ENCODE measurements at regions of chr11 and their contacts with region 1.

Region 1: GRCh38 chr11:67468835-67469811 is at the start of gene TMEM134:
- DNase-seq: peak; percentile 92 to 94
- ATAC-seq: peak; percentile 92 to 96 (median 94)
- H3K4me3 ChIP-seq: peak within 1 kb of the TSS; percentile 67 to 99 (median 84)
- H3K27ac ChIP-seq: peak within 1 kb of the TSS; percentile 44 to 94 (median 89)
- H3K4me1 ChIP-seq: peaks cover 4 to 47% (median 22%) of the 10 kb centered on the region in 9 donors
- H3K27me3 ChIP-seq: no peaks in the 10 kb centered on the region
- CTCF ChIP-seq: peak in 8 of 9 donors; percentile 44 to 73 (median 56)
- total RNA-seq, gene TMEM134: 69.8 to 104 (median 81.2) TPM

Region 2: DNA sequence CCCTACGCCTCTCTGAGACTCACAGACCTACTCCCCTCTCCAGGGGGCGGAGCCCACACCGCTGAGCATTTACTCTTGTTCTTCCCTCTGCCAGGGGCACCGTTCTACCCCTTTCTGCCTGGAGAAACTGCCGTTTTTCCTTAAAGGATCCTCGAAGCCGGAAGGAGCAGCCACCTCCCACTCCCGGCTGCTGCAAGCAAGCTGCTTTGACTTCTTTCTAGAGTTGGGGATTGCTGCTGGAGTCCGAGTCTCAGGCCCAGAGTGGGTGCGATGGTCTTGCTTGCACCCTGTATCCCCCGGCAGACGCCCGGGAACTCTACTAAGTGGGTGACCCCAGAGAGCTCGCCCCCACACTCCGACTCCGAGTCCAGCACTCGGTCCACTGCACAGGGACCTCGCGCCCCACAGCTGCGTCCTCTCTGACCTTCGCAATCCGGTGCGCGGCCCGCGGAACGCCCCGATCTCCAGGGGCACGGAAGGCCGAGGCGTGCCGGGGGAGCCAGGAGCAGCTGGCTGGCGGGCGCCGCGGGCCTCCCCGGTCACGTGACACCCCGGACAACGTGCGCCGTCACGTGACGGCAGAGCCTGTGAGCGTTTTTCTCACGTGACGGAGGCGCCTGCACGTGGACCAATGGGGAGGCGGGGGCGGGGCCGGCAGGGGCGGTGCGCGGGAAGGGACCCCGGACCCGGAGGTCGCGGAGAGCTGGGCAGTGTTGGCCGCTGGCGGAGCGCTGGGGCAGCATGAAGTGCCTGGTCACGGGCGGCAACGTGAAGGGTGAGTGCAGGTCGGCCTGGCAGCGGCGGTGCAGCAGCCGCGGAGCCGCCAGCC is 77.6 kb before region 1 on chr11 and contains the start of gene RAD9A:
- intact Hi-C with region 1: loop called in 1 of 10 experiments (anchors 5 kb)
- DNase-seq: peak; percentile 95
- ATAC-seq: peak; percentile 82 to 94 (median 88)
- H3K4me3 ChIP-seq: peak within 1 kb of the TSS; percentile 66 to 91 (median 81)
- H3K27ac ChIP-seq: peak within 1 kb of the TSS; percentile 28 to 92 (median 86)
- H3K4me1 ChIP-seq: peaks cover 4 to 29% (median 21%) of the 10 kb centered on the region in 9 donors
- H3K27me3 ChIP-seq: no peaks in the 10 kb centered on the region
- CTCF ChIP-seq: no peak
- total RNA-seq, gene RAD9A: 4.8 to 13.8 (median 6.4) TPM

Region 3: GRCh38 chr11:67401495-67402191 is 67.5 kb before region 1 on chr11 and contains the start of gene PPP1CA:
- intact Hi-C with region 1: loop called in 7 of 10 experiments (anchors 5 kb)
- DNase-seq: peak; percentile 90 to 94
- ATAC-seq: peak; percentile 76 to 95 (median 86)
- H3K4me3 ChIP-seq: peak within 1 kb of the TSS; percentile 68 to 99 (median 96)
- H3K27ac ChIP-seq: peak within 1 kb of the TSS; percentile 89 to 99 (median 97)
- H3K4me1 ChIP-seq: peaks cover 0 to 89% (median 54%) of the 10 kb centered on the region in 9 donors
- H3K27me3 ChIP-seq: no peaks in the 10 kb centered on the region
- CTCF ChIP-seq: peak; percentile 38 to 91 (median 62)
- total RNA-seq, gene PPP1CA: 92.0 to 143 (median 103) TPM

Region 4: DNA sequence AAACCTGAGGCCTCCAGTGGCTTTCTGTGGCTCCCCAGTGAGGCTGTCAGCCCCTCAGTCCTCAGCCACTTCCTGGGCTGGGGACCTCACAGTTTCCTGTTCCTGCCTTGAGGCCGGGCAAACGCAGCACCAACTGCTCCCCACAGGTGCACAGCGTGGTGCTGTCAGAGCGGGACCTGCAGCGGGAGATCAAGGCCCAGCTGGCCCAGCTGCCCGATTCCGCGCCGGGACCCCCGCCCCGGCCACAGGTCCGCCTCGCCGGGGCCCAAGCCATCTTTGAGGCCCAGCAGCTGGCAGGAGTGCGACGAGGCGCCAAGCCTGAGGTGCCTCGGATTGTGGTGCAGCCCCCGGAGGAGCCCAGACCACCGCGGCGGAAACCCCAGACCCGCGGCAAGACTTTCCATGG is 59.9 kb before region 1 on chr11:
- intact Hi-C with region 1: loop called in 7 of 10 experiments (anchors 5 kb)
- DNase-seq: no peak
- ATAC-seq: no peak
- H3K4me3 ChIP-seq: peak overlapping the region in 2 of 10 donors; percentile 20 to 41
- H3K27ac ChIP-seq: peak overlapping the region in 1 of 10 donors; percentile 99
- H3K4me1 ChIP-seq: peaks cover 0 to 57% (median 0%) of the 10 kb centered on the region in 9 donors
- H3K27me3 ChIP-seq: peaks cover 0 to 54% (median 45%) of the 10 kb centered on the region in 7 donors
- CTCF ChIP-seq: no peak

Region 5: DNA sequence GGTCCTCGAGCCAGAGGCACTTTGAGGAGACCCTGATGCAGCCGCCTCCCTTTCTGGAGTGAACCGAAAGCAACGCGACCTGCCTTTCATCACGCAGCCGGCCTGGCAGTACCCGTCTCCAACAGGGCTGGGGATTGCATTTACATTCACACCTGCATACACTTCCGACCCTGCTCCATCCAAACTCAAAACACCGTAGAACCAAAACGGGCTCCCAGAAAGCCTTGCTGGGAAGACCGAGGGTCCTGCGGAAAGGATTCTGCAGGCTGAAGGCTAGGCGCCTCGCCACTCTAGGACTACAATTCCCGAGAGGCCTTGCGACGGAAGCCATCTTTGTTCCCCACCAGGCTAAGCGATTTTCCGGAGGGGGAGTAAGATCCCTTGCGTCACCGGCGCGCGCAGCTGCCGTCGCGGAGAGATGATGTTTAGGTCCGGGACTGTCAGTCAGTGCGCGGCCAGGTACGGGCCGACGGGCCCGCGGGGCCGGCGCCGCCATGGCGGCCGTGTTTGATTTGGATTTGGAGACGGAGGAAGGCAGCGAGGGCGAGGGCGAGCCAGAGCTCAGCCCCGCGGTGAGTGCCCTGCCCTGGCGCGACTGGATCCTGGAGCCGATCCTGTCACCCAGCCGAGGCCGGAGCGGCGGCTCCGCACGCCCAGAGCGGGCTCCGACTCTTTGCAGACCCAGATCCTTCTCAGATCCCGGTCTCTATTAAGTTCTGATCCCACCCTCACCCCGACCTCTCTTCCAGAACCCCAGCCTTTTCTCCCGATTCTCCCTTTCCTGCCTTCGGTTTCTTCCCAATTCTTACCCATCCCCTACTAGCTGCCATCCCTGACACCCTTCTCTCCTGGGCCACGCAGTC is 40.8 kb before region 1 on chr11 and contains the start of gene RPS6KB2:
- intact Hi-C with region 1: loop called in 2 of 10 experiments (anchors 5 kb)
- DNase-seq: peak; percentile 99
- ATAC-seq: peak; percentile 92 to 96 (median 94)
- H3K4me3 ChIP-seq: peak within 1 kb of the TSS; percentile 59 to 95 (median 86)
- H3K27ac ChIP-seq: peak within 1 kb of the TSS; percentile 38 to 96 (median 94)
- H3K4me1 ChIP-seq: peaks cover 0 to 27% (median 20%) of the 10 kb centered on the region in 9 donors
- H3K27me3 ChIP-seq: no peaks in the 10 kb centered on the region
- CTCF ChIP-seq: no peak
- total RNA-seq, gene RPS6KB2: 16.3 to 30.4 (median 20.8) TPM

Region 6: DNA sequence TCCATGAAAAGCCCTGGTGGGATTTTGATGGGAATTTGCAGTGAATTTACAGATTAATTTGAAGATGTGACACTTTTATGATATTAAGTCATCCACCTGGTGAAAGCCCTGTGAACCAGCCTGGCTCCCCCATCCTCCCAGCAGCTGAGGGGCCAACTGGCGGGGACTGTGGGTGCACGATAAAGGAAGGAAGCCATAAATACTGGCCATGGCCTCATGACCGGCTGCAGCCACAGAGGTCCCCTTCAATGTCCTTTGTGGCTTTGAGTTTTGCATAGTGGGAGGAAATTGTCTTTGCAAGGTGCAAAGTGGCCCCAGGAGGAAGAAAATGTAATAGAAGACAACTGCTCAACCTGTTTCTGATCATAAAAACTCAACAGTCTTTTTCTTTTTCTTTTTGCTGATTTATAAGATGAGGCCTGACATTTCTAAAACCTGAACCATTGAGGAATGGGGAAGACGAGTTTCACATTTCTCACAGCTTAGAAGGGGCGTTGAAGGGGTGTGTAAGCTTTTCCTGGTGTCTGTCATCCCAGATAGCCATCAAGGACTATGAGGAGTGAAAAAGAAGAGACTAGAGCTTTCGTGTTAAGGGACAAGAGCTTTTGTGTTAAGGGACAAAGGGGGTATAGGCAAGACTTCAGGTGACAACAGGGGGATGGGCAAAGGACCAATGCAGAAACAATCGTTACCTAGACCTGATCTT is 131.4 kb after region 1 on chr11:
- intact Hi-C with region 1: no loop called
- DNase-seq: no peak
- ATAC-seq: no peak
- H3K4me3 ChIP-seq: no peak overlapping the region
- H3K27ac ChIP-seq: no peak overlapping the region
- H3K4me1 ChIP-seq: peaks cover 0 to 2% (median 0%) of the 10 kb centered on the region in 9 donors
- H3K27me3 ChIP-seq: peaks cover 0 to 10% (median 0%) of the 10 kb centered on the region in 7 donors
- CTCF ChIP-seq: no peak

Measured in heart right ventricle (tissue), 16 donors.